ENCODE measurements at regions of chr3 and their contacts with region 1.

Region 1: GRCh38 chr3:170327040-170327808 is 30.3 kb upstream of the SKIL start:
- DNase-seq: no peak
- H3K4me3 ChIP-seq: no peak overlapping the region
- H3K27ac ChIP-seq: no peak overlapping the region
- H3K4me1 ChIP-seq: peaks cover 0 to 5% (median 2%) of the 10 kb centered on the region in 4 experiments
- H3K27me3 ChIP-seq: no peaks in the 10 kb centered on the region

Region 2: GRCh38 chr3:170277833-170278580 is 49.2 kb before region 1 on chr3:
- CTCF ChIA-PET with region 1: no interaction called
- POLR2A ChIA-PET with region 1: no interaction called
- DNase-seq: peak; percentile 4 to 36 (median 25)
- H3K4me3 ChIP-seq: peak overlapping the region in 2 of 7 experiments; percentile 22 to 58
- H3K27ac ChIP-seq: peak overlapping the region in 1 of 2 experiments; percentile 25
- H3K4me1 ChIP-seq: peaks cover 2 to 14% (median 10%) of the 10 kb centered on the region in 4 experiments
- H3K27me3 ChIP-seq: no peaks in the 10 kb centered on the region

Region 3: GRCh38 chr3:170357176-170357919 is 30.1 kb after region 1 on chr3 and contains the start of gene SKIL:
- CTCF ChIA-PET with region 1: interaction called, 4 read pairs
- POLR2A ChIA-PET with region 1: interaction called, 10 read pairs
- DNase-seq: peak; percentile 97 to 98 (median 98)
- H3K4me3 ChIP-seq: peak within 1 kb of the TSS; percentile 69 to 87 (median 80)
- H3K27ac ChIP-seq: peak within 1 kb of the TSS; percentile 90 to 97
- H3K4me1 ChIP-seq: peaks cover 12 to 42% (median 22%) of the 10 kb centered on the region in 4 experiments
- H3K27me3 ChIP-seq: no peaks in the 10 kb centered on the region